ENCODE measurements at regions of chr12 and their contacts with region 1.

Region 1: DNA sequence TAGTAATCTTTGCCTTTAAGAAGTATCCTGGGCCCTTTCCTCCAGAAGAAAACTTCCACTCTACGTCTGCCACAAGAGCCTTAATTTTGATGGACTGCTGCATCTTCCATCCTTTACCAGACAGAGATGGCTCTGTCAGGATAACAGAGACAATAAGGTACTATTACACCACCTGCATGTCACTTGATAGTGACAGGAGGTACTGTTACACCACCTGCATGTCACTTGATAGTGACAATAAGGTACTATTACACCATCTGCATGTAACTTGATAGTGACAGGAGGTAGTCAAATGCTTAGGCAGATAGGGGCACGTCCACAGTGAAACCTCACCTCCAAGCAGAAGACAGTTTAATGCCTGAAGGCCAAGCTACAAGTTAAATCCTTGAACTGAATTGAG is 13.9 kb downstream of the OR6C74 start:
- DNase-seq: no peak
- H3K4me3 ChIP-seq: no peak overlapping the region
- CTCF ChIP-seq: no peak
- POLR2A ChIP-seq: no peak

Region 2: DNA sequence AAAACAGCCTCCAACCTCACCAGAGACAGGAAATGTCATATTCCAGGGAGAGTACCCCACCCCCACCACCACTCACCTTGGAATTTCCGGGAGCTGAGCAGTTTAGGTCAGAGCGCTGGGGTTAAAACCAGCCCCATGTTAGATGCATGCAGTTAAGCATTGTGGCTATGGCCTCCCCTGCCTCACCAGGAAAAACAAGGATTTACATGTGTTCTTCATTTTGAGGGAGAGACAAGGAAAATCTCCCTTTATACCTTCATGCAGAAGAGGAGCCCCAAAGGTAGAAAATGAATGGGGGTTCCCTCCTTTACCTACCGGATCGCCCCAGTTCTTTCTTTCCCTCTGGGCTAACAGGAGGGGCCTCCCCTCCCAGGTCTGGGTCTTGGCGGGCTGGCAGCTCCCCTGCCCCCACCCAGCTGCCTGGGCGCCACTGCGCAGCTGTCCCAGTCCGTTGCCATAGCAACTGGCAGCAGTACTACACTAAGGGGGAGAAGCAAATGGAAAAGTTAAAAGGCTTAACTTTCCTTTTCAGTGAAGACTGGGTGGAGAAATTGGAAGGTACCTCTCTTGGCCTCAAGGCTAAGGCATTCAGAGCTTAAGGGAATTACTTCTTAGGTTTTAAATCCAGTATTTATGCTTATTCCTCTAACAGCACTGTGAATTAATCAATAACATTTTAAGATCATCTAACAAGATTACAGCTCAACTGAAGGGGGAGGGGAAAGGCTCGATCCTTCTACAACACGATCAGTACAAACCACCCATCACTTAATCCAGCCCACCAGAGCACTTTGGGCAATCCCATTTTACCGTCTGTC is 998.9 kb before region 1 on chr12:
- intact Hi-C with region 1: no loop called
- DNase-seq: peak in 1 of 2 donors; percentile 37
- H3K4me3 ChIP-seq: no peak overlapping the region
- CTCF ChIP-seq: no peak
- POLR2A ChIP-seq: no peak

Region 3: GRCh38 chr12:55280991-55281390 is 22.7 kb after region 1 on chr12:
- intact Hi-C with region 1: no loop called
- DNase-seq: no peak
- H3K4me3 ChIP-seq: no peak overlapping the region
- CTCF ChIP-seq: no peak
- POLR2A ChIP-seq: no peak

Region 4: DNA sequence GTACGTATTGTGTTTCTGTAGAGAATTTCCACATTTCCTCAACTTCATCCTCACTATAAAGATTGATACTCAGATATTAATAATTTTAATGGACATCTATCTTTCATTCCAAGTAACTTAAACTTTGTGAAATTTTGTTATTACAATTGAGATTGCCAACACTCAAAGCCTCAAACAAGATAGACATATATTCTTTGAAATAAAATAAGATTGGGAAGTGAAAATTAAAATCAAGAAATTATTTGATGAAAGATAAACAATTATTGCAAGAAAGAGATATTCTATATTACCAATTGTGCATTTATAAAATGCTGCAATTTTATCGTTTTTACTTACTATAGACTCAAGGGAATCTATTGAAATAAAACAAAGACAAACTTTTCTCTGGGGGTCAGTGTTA is 38.2 kb after region 1 on chr12 and contains the start of gene OR6C6:
- intact Hi-C with region 1: loop called (anchors 1 kb)
- DNase-seq: no peak
- H3K4me3 ChIP-seq: no peak within 1 kb of the TSS
- CTCF ChIP-seq: no peak
- POLR2A ChIP-seq: no peak
- total RNA-seq, gene OR6C6: not detected

Region 5: GRCh38 chr12:55330446-55330845 is 72.1 kb after region 1 on chr12 and contains the start of gene OR6C3:
- intact Hi-C with region 1: no loop called
- DNase-seq: no peak
- H3K4me3 ChIP-seq: no peak within 1 kb of the TSS
- CTCF ChIP-seq: no peak
- POLR2A ChIP-seq: no peak
- total RNA-seq, gene OR6C3: not detected

Region 6: DNA sequence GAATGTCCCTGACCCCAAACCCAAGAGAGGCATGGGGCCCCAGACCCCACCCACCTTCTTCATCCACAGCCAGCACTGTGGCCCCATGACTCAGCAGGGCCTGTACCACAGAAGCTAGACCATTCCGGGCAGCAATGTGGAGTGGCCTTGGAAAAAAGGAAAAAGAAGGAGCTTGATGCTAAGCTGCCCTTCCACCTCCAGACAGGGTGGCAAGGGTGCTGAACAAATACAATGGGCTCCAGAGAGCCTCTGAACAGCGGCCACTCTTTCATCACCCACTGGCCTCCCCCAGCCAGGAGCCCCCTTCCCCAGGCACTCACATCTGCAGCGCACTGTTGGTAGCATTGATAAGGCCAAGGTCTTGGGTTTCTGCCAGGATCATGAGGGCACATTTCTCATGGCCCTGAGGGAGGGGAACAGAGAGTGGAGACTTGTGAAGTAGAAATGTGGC is 985.5 kb after region 1 on chr12:
- intact Hi-C with region 1: no loop called
- DNase-seq: no peak
- H3K4me3 ChIP-seq: no peak overlapping the region
- CTCF ChIP-seq: no peak
- POLR2A ChIP-seq: no peak

Measured in lower leg skin (tissue), 4 donors.